Activated T-helper 1 cell treated with anti-CD3 and anti-CD28 coated beads, Interleukin-12 subunit alpha, Interleukin-12 subunit beta, Interleukin-2, Interleukin-4 antibody, amounts not matched to agents 30 ng/mL and 10 ng/mL and 1 ng/mL, durations not matched to agents 14 hours and 24 hours and 36 hours (primary cell): ENCODE measurements at regions of chr1 and their contacts with region 1.

Region 1: GRCh38 chr1:165697881-165698760 is at the start of gene ALDH9A1:
- DNase-seq: peak; percentile 82
- H3K4me3 Mint-ChIP-seq: peak within 1 kb of the TSS; percentile 95
- H3K27ac Mint-ChIP-seq: peak within 1 kb of the TSS; percentile 97
- H3K4me1 Mint-ChIP-seq: peaks cover 20% of the 10 kb centered on the region
- H3K27me3 Mint-ChIP-seq: peaks cover 2% of the 10 kb centered on the region
- total RNA-seq, gene ALDH9A1: 41.7 and 42.8 TPM in 2 replicates

Region 2: GRCh38 chr1:164101802-164102201 is 1596.3 kb before region 1 on chr1:
- intact Hi-C with region 1: no loop called
- DNase-seq: no peak
- H3K4me3 Mint-ChIP-seq: no peak overlapping the region
- H3K27ac Mint-ChIP-seq: no peak overlapping the region
- H3K4me1 Mint-ChIP-seq: no peaks in the 10 kb centered on the region
- H3K27me3 Mint-ChIP-seq: no peaks in the 10 kb centered on the region

Region 3: DNA sequence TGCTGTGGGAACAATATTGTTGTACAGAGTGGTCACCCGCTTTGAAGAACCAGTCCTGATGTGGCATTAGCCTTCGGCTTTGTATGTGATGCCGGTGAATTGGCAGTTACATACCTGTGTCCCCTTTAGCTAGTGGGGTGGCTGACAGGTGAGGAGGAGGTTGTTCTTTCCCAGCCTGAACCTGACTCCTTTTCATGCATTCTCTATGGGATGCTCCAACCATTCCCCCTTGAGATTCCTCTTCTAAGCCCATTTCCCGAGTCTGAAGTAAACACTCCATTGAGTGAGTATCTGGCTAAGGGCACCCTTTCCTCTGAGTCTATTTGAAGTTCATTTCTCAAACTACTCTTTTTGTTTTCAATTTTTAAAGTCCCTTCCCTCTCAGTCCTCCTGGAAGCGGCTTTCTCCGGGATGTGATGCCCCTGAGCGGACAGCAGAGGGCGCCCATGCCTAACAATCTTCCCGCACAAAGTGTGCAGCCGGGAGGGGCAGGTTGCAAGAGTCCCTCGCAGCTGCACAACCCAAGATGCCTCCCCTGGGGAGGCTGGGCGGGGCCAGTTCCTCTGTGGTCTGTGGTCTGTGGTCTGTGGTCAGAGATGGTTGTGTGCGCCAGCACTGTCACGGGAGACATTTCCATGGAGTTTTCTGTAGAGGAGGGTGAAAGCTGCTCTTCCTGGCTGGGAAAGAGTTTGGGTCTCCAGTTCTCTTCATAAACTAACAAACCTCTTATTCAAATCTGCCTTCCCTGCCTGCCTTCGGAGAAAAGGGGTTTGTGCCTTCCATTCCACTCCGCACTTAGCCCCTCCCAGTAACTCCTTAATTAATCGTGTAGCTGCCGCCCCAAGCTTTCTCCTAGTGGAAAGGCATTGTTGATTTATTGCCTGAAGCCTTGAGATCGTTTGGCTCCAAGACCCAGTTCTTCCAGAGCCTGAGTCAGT is 305.2 kb before region 1 on chr1:
- intact Hi-C with region 1: loop called (anchors 2 kb)
- DNase-seq: peak; percentile 90
- H3K4me3 Mint-ChIP-seq: peak overlapping the region; percentile 58
- H3K27ac Mint-ChIP-seq: peak overlapping the region; percentile 92
- H3K4me1 Mint-ChIP-seq: peaks cover 25% of the 10 kb centered on the region
- H3K27me3 Mint-ChIP-seq: peaks cover 80% of the 10 kb centered on the region

Region 4: GRCh38 chr1:165452336-165453130 is 245.6 kb before region 1 on chr1:
- intact Hi-C with region 1: no loop called
- DNase-seq: no peak
- H3K4me3 Mint-ChIP-seq: no peak overlapping the region
- H3K27ac Mint-ChIP-seq: no peak overlapping the region
- H3K4me1 Mint-ChIP-seq: no peaks in the 10 kb centered on the region
- H3K27me3 Mint-ChIP-seq: peaks cover 17% of the 10 kb centered on the region

Region 5: DNA sequence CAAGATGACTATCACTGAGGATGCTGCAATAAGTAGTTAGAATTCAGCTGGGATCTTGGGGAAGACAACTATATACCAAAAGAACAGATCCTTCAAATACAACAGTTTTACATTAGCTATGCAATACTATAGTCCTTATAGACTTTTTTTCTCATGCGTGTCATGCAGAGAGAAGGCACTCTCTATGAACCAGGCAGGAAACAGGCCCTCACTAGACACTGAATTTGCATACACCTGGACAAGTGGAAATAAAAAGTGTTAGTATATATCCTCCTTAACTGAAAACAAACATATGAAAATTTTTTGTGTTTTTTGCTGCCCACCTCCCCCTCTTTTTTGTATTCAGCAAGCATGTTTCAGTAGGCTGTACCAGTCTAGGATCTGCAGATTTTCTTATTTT is 40.7 kb after region 1 on chr1:
- intact Hi-C with region 1: no loop called
- DNase-seq: no peak
- H3K4me3 Mint-ChIP-seq: no peak overlapping the region
- H3K27ac Mint-ChIP-seq: no peak overlapping the region
- H3K4me1 Mint-ChIP-seq: no peaks in the 10 kb centered on the region
- H3K27me3 Mint-ChIP-seq: no peaks in the 10 kb centered on the region

Region 6: DNA sequence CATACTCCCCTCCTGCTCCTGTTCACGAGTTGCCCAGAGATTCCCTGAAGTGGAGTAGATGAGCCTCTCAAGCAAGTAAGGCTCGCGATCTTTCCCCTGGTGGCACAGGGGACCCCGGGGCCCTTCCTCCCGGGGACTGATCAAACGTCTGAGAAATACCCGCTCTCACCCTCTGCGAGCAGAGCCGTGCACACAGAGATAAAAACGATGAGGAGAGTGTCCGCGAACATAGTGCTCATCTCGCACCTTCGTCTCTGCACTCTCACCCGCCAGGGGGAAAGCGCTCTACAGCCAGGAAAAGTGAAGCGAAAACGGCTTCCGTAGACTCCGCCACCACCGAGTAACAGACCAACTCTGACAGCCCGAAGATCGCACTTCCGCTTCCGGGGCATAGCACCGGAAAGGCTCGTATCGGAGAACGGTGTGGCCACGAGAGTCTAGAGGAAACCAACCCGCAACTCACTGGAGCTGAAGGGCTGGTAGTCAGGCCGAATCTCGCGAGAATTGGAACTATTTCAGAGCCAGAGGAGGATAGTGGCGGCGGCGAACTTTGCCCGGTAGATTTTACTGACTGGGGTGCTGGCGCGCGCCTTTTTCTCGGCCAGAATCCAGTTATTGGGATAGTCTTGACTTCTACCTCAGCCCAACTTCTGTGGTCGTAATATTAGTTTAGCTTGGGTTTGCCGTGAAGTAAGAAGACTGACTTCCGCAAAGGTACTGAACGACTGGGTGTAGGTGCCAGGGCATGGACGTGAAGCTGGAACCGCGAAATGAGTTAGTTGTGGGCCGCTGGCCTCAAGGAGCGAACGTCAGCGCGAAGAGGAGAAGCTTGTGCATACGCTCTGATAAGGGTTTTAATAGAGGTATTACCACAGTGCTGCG is 70.6 kb after region 1 on chr1 and contains the start of gene TMCO1:
- intact Hi-C with region 1: loop called (anchors 1 kb)
- DNase-seq: peak; percentile 94
- H3K4me3 Mint-ChIP-seq: peak within 1 kb of the TSS; percentile 99
- H3K27ac Mint-ChIP-seq: peak within 1 kb of the TSS; percentile 100
- H3K4me1 Mint-ChIP-seq: peaks cover 53% of the 10 kb centered on the region
- H3K27me3 Mint-ChIP-seq: no peaks in the 10 kb centered on the region
- total RNA-seq, gene TMCO1: 97.1 and 102 TPM in 2 replicates

Region 7: GRCh38 chr1:165914136-165914798 is 216.1 kb after region 1 on chr1:
- intact Hi-C with region 1: loop called (anchors 1 kb)
- DNase-seq: peak; percentile 52
- H3K4me3 Mint-ChIP-seq: no peak overlapping the region
- H3K27ac Mint-ChIP-seq: no peak overlapping the region
- H3K4me1 Mint-ChIP-seq: no peaks in the 10 kb centered on the region
- H3K27me3 Mint-ChIP-seq: no peaks in the 10 kb centered on the region

Region 8: DNA sequence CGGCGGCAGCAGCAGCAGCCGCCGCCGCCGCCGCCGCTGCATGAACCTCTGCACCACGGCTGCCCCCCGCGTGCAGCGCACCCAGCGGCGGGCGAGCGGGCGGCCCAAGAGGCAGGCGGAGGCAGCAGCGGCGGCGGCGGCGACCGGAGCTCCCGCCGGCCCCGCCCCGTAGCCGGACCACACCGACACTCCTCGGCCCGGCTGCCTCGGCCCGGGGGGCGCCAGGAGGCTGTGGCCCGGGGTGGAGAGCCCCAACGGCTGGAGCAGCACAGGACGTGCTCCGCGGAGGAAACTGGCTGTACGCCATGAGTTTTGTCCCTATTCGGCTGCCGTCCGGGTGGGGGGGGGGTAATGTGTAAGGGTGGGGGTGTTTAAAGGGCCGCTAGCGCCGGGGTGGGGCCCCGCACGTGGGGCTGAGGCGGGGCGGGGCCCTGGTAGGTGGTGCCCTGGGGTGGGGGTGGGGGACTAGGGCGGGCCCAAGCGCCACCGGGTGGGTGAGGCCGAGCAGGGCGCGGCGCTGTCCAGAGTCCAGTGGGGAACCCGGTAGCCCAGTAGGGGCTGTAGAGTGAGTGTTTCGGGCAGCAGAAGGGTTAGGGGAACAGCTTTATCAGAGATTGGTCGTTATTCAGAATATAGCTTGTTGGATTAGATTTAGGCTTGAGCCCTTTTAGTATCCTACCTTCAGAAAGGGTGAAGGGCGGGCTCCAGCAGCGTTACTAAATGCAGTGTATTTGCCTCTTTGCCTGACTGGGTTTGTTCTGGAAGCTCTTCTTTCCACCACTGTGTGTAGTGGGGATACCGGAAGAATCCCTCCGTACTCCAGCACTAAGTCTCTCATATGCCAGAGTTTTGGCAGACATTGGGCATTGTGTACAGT is 468.8 kb after region 1 on chr1 and contains the start of gene FAM78B:
- intact Hi-C with region 1: loop called (anchors 2 kb)
- DNase-seq: peak; percentile 36
- H3K4me3 Mint-ChIP-seq: peak within 1 kb of the TSS; percentile 83
- H3K27ac Mint-ChIP-seq: no peak within 1 kb of the TSS
- H3K4me1 Mint-ChIP-seq: peaks cover 16% of the 10 kb centered on the region
- H3K27me3 Mint-ChIP-seq: peaks cover 39% of the 10 kb centered on the region
- total RNA-seq, gene FAM78B: 1.0 TPM in 2 replicates